Caco-2 (cell line): ENCODE measurements at regions of chr20 and their contacts with region 1.

Region 1: DNA sequence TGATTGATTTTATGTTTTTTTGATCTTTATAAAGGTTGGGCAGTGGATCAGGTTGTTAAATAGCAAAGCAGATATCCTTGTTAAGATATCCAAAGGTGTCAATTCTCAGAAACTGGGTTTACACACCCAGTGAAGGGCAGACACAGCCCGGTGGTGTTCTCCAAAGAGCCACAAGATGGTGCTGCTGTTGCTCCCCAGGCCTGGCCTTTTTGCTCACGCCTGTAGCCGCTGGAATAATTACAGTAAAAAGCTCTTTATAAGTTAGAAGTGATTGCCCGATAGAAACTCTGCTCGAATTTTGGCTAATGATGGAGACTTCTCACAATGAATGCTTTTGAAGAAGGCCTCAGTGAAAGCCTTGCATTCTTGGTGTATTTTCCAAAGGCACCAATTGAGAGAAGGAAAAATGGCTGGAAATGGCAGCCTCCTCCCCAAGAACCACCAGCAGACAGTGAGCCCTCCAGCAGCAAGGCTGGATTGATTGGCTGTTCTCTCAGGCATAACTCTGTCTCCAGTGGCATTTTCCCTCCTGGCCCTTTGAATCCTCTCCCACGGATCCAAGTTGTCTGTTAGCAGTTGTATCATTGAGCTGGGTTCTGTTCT is 120.5 kb upstream of the CHD6 start:
- DNase-seq: peak; percentile 76 to 82
- H3K4me3 ChIP-seq: no peak overlapping the region
- H3K4me3 Mint-ChIP-seq: no peak overlapping the region
- H3K27ac Mint-ChIP-seq: no peak overlapping the region
- H3K4me1 ChIP-seq: peaks cover 9% of the 10 kb centered on the region; the same call in 1 of the 2 replicates
- H3K4me1 Mint-ChIP-seq: no peaks in the 10 kb centered on the region
- H3K27me3 ChIP-seq: no peaks in the 10 kb centered on the region
- H3K27me3 Mint-ChIP-seq: peaks cover 5% of the 10 kb centered on the region
- CTCF ChIP-seq: peak; percentile 97 to 100

Region 2: GRCh38 chr20:41245086-41245707 is 493.5 kb before region 1 on chr20:
- CTCF ChIA-PET with region 1: no interaction called
- POLR2A ChIA-PET with region 1: no interaction called
- intact Hi-C with region 1: no loop called
- DNase-seq: no peak
- H3K4me3 ChIP-seq: no peak overlapping the region
- H3K4me3 Mint-ChIP-seq: no peak overlapping the region
- H3K27ac Mint-ChIP-seq: no peak overlapping the region
- H3K4me1 ChIP-seq: peaks cover 9% of the 10 kb centered on the region
- H3K4me1 Mint-ChIP-seq: peaks cover 7% of the 10 kb centered on the region
- H3K27me3 ChIP-seq: no peaks in the 10 kb centered on the region
- H3K27me3 Mint-ChIP-seq: no peaks in the 10 kb centered on the region
- CTCF ChIP-seq: no peak

Region 3: GRCh38 chr20:41669708-41670263 is 68.9 kb before region 1 on chr20:
- CTCF ChIA-PET with region 1: no interaction called
- POLR2A ChIA-PET with region 1: no interaction called
- intact Hi-C with region 1: no loop called
- DNase-seq: peak in 1 of 2 experiments; percentile 29
- H3K4me3 ChIP-seq: no peak overlapping the region
- H3K4me3 Mint-ChIP-seq: no peak overlapping the region
- H3K27ac Mint-ChIP-seq: peak overlapping the region; percentile 0
- H3K4me1 ChIP-seq: no peaks in the 10 kb centered on the region
- H3K4me1 Mint-ChIP-seq: peaks cover 8% of the 10 kb centered on the region
- H3K27me3 ChIP-seq: no peaks in the 10 kb centered on the region
- H3K27me3 Mint-ChIP-seq: no peaks in the 10 kb centered on the region
- CTCF ChIP-seq: no peak

Region 4: DNA sequence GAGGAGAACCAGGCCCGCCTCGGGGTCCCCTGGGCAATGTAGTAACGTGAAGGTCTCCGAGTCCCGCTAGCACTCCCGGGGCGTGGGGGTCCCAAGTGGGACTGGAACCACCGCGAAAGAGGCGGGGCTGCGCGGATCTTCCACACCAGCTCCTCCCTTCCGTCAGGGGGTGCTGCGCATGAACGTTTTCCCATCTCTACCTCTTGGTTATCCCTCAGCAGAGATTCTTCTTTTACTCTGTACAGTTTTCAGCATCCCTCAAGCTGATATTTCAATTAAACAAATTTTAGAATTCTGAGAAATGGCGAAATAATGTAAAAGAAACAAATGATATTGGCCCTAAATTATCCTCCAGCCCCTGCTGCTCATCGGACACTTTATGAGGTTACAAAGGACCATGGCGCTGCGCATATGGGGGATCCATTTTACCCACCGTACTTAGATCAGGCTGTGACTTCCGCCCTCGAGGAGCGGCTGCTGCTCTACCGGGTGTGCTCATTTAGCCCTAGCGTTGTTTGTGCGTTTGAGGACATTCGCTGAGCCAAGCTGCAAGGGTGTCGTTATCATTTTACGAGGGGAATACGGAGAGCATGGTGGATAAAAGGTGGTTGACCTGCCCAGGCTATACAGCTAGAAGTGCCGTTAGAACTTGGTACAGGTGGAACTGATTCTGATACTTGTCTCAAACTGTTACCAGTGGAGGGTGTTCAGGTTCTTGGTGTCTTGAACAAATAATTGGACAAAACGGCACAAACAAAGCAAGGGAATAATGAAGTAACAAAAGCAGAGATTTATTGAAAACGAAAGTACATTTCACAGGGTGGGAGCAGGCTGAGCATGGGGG is 45.3 kb before region 1 on chr20:
- CTCF ChIA-PET with region 1: interaction called, 7 read pairs
- POLR2A ChIA-PET with region 1: no interaction called
- intact Hi-C with region 1: loop called (anchors 5 kb)
- DNase-seq: peak; percentile 92 to 95
- H3K4me3 ChIP-seq: peak overlapping the region; percentile 43
- H3K4me3 Mint-ChIP-seq: peak overlapping the region; percentile 86
- H3K27ac Mint-ChIP-seq: peak overlapping the region; percentile 90
- H3K4me1 ChIP-seq: peaks cover 16% of the 10 kb centered on the region
- H3K4me1 Mint-ChIP-seq: peaks cover 19% of the 10 kb centered on the region
- H3K27me3 ChIP-seq: no peaks in the 10 kb centered on the region
- H3K27me3 Mint-ChIP-seq: peaks cover 2% of the 10 kb centered on the region
- CTCF ChIP-seq: peak; percentile 66 to 68

Region 5: DNA sequence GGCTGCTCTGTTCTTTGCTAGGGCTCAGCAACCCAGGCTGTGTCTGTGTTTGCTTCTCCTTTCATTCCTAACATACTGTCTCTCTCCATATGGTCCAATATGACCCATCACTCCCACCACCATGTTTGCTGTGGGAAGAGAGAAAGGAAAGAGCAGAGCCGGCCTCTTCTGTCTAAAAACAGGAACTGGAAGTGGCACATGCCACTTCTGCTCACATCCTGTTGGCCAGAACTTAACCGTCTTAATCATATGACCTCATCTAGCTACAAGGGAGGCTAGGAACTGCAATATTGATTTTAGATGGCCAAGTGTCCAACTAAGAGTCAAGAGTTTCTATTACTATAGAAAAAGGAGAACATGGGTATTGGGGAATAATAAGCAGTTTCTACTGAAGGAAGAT is 92.0 kb after region 1 on chr20:
- CTCF ChIA-PET with region 1: no interaction called
- POLR2A ChIA-PET with region 1: no interaction called
- intact Hi-C with region 1: no loop called
- DNase-seq: no peak
- H3K4me3 ChIP-seq: no peak overlapping the region
- H3K4me3 Mint-ChIP-seq: no peak overlapping the region
- H3K27ac Mint-ChIP-seq: no peak overlapping the region
- H3K4me1 ChIP-seq: no peaks in the 10 kb centered on the region
- H3K4me1 Mint-ChIP-seq: no peaks in the 10 kb centered on the region
- H3K27me3 ChIP-seq: no peaks in the 10 kb centered on the region; the same call in 1 of the 2 replicates
- H3K27me3 Mint-ChIP-seq: peaks cover 24% of the 10 kb centered on the region
- CTCF ChIP-seq: no peak

Region 6: GRCh38 chr20:41889126-41889870 is 150.6 kb after region 1 on chr20:
- CTCF ChIA-PET with region 1: interaction called, 3 read pairs
- POLR2A ChIA-PET with region 1: no interaction called
- intact Hi-C with region 1: loop called (anchors 2 kb)
- DNase-seq: peak in 1 of 2 experiments; percentile 49
- H3K4me3 ChIP-seq: no peak overlapping the region
- H3K4me3 Mint-ChIP-seq: no peak overlapping the region
- H3K27ac Mint-ChIP-seq: no peak overlapping the region
- H3K4me1 ChIP-seq: no peaks in the 10 kb centered on the region
- H3K4me1 Mint-ChIP-seq: no peaks in the 10 kb centered on the region
- H3K27me3 ChIP-seq: no peaks in the 10 kb centered on the region; the same call in 1 of the 2 replicates
- H3K27me3 Mint-ChIP-seq: peaks cover 21% of the 10 kb centered on the region
- CTCF ChIP-seq: peak in 1 of 2 experiments; percentile 39

Region 7: DNA sequence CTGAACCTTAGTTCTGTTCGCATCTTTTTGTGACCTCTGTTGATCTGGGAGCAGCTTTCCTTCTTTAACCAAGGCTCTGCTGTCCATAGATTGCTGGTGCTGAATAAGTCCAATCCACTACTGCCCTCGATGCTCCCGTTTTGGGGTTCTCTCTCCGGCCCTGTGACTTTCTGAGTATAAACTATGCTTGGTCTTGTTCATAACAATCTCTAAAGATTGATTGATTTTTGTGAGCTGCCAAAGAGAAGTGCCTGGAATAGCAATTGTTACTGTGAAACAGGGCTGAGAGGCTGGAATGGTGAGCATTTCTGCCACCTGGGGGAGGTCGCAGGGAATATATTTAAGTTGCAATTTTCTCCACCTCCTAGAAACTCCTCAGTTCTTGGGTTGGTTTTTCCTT is 302.4 kb after region 1 on chr20:
- CTCF ChIA-PET with region 1: interaction called, 9 read pairs
- POLR2A ChIA-PET with region 1: no interaction called
- intact Hi-C with region 1: loop called (anchors 1 kb)
- DNase-seq: peak in 1 of 2 experiments; percentile 49
- H3K4me3 ChIP-seq: no peak overlapping the region
- H3K4me3 Mint-ChIP-seq: no peak overlapping the region
- H3K27ac Mint-ChIP-seq: no peak overlapping the region
- H3K4me1 ChIP-seq: no peaks in the 10 kb centered on the region
- H3K4me1 Mint-ChIP-seq: no peaks in the 10 kb centered on the region
- H3K27me3 ChIP-seq: no peaks in the 10 kb centered on the region
- H3K27me3 Mint-ChIP-seq: peaks cover 6% of the 10 kb centered on the region
- CTCF ChIP-seq: peak; percentile 62 to 69

Region 8: GRCh38 chr20:43187476-43188233 is 1449.0 kb after region 1 on chr20:
- CTCF ChIA-PET with region 1: no interaction called
- POLR2A ChIA-PET with region 1: no interaction called
- intact Hi-C with region 1: loop called (anchors 2 kb)
- DNase-seq: peak; percentile 76 to 89
- H3K4me3 ChIP-seq: no peak overlapping the region
- H3K4me3 Mint-ChIP-seq: no peak overlapping the region
- H3K27ac Mint-ChIP-seq: no peak overlapping the region
- H3K4me1 ChIP-seq: no peaks in the 10 kb centered on the region
- H3K4me1 Mint-ChIP-seq: no peaks in the 10 kb centered on the region
- H3K27me3 ChIP-seq: no peaks in the 10 kb centered on the region
- H3K27me3 Mint-ChIP-seq: peaks cover 20% of the 10 kb centered on the region
- CTCF ChIP-seq: peak; percentile 99